Activated naive CD4-positive, alpha-beta T cell treated with anti-CD3 and anti-CD28 coated beads for 36 hours (primary cell): ENCODE measurements at regions of chr12 and their contacts with region 1.

Region 1: DNA sequence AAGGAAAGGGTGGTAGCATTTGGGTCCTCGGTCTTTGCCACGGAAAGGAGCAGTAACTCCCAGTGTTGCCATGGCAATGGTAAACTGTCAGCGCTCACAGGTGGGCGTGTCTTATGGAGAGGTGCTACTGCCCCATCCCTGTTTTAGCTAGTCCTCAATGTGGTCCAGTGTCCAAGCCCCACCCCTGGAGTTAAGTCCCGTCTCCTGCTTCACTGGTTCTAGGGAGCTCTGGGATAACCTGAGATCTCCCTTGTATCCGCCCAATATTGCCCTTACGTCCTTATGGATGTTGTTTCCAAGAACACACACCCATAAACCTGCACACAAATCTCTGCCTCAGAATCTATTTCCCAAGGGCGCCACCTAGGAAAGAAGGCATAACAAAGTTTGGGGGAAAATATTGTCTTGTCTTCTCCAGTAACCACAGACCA is 64.2 kb downstream of the SPRING1 start:
- DNase-seq: no peak
- H3K4me3 Mint-ChIP-seq: no peak overlapping the region
- H3K27ac Mint-ChIP-seq: peak overlapping the region; percentile 43
- H3K4me1 Mint-ChIP-seq: peaks cover 29% of the 10 kb centered on the region
- H3K27me3 Mint-ChIP-seq: no peaks in the 10 kb centered on the region

Region 2: GRCh38 chr12:116135209-116135930 is 538.3 kb before region 1 on chr12:
- CTCF ChIA-PET with region 1: no interaction called
- intact Hi-C with region 1: loop called (anchors 10 kb)
- DNase-seq: no peak
- H3K4me3 Mint-ChIP-seq: no peak overlapping the region
- H3K27ac Mint-ChIP-seq: peak overlapping the region; percentile 89
- H3K4me1 Mint-ChIP-seq: peaks cover 76% of the 10 kb centered on the region
- H3K27me3 Mint-ChIP-seq: no peaks in the 10 kb centered on the region

Region 3: GRCh38 chr12:116194935-116195431 is 478.7 kb before region 1 on chr12:
- CTCF ChIA-PET with region 1: no interaction called
- intact Hi-C with region 1: loop called (anchors 5 kb)
- DNase-seq: peak; percentile 87
- H3K4me3 Mint-ChIP-seq: no peak overlapping the region
- H3K27ac Mint-ChIP-seq: no peak overlapping the region
- H3K4me1 Mint-ChIP-seq: peaks cover 53% of the 10 kb centered on the region
- H3K27me3 Mint-ChIP-seq: no peaks in the 10 kb centered on the region

Region 4: GRCh38 chr12:116319898-116320621 is 353.6 kb before region 1 on chr12:
- CTCF ChIA-PET with region 1: no interaction called
- intact Hi-C with region 1: loop called (anchors 5 kb)
- DNase-seq: peak; percentile 50
- H3K4me3 Mint-ChIP-seq: peak overlapping the region; percentile 45
- H3K27ac Mint-ChIP-seq: peak overlapping the region; percentile 39
- H3K4me1 Mint-ChIP-seq: peaks cover 38% of the 10 kb centered on the region
- H3K27me3 Mint-ChIP-seq: no peaks in the 10 kb centered on the region

Region 5: GRCh38 chr12:116759783-116760621 is 86.3 kb after region 1 on chr12:
- CTCF ChIA-PET with region 1: no interaction called
- intact Hi-C with region 1: no loop called
- DNase-seq: peak; percentile 59
- H3K4me3 Mint-ChIP-seq: peak overlapping the region; percentile 70
- H3K27ac Mint-ChIP-seq: peak overlapping the region; percentile 63
- H3K4me1 Mint-ChIP-seq: peaks cover 9% of the 10 kb centered on the region
- H3K27me3 Mint-ChIP-seq: no peaks in the 10 kb centered on the region